PC-3 (cell line): ENCODE measurements at regions of chr6 and their contacts with region 1.

Region 1: DNA sequence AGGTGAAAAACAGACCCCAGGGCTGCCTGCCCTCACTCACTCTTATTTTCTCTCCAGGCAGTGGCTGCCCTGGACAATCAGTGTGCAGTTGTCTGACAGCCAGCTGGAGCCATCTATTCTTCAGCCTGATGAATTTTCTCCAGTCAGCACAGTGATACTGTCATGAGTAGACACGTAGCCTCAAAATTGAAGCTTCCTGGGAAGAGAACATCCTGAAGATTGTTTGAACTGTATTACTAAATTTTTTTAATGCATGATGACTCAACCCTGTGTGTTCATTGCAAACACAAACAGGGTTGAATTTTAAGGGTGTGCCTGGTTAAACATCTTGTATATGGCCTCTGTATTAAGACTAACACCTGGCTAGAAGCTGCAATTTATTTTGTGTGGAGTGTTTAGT is 49.8 kb upstream of the STXBP5 start:
- DNase-seq: peak; percentile 94
- ATAC-seq: peak; percentile 97
- H3K4me3 ChIP-seq: peak overlapping the region; percentile 27; the same call in 1 of the 2 replicates
- H3K27ac ChIP-seq: peak overlapping the region; percentile 91
- H3K4me1 ChIP-seq: peaks cover 28% of the 10 kb centered on the region
- H3K27me3 ChIP-seq: no peaks in the 10 kb centered on the region
- CTCF ChIP-seq: no peak

Region 2: DNA sequence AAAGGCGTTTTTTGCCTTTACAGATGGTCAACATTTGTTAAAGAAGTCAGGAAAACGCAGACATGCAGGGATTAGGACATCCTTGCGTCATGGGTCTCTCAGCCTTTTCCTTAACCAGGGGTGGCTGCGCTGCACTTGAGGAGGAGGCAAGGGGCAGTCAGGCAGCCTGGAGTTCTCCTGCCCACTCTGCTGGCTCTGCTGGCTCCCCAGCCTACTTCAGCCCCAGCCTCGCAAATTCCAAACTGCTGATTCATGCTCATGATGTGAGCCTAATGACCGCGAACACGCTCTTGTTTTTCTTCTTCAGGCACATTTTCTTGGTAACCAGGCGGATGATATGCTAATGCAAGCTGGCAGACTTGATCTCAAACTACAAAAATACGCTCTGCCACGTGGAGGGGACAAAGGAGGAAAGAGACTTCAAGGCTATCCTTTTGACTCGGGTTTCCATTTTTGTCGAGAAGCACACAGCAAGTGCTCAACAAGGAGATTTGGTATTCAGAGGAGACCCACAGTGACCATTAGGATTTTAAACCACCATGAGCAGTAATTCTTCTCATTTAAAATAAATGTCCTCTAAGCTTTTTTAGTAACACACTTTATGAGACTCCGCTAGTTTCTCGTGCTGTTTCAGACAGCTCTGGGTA is 240.5 kb before region 1 on chr6:
- CTCF ChIA-PET with region 1: no interaction called
- POLR2A ChIA-PET with region 1: no interaction called
- intact Hi-C with region 1: loop called (anchors 5 kb)
- DNase-seq: peak; percentile 93
- ATAC-seq: peak; percentile 76
- H3K4me3 ChIP-seq: peak overlapping the region; percentile 58
- H3K27ac ChIP-seq: peak overlapping the region; percentile 98
- H3K4me1 ChIP-seq: peaks cover 41% of the 10 kb centered on the region
- H3K27me3 ChIP-seq: no peaks in the 10 kb centered on the region
- CTCF ChIP-seq: no peak

Region 3: DNA sequence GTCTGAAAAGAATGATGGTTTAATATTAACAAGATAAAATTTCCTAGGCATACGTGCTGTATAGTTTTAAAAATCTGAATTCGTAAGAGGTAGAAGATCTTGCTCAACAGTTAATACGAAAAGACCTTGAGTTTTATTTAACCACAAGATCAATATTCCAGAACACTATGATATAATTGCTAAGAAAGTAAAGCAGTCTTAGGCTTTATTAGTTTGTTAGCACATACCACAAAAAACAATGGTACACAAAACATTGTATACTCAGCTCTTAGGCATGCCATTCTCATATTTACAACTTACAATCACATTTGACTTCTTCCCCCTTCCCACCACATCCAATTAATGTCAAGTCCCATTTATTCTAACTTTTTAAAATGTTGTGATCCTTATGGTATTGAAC is 25.4 kb after region 1 on chr6:
- CTCF ChIA-PET with region 1: no interaction called
- POLR2A ChIA-PET with region 1: no interaction called
- intact Hi-C with region 1: loop called (anchors 2 kb)
- DNase-seq: peak; percentile 54
- ATAC-seq: peak; percentile 85
- H3K4me3 ChIP-seq: no peak overlapping the region
- H3K27ac ChIP-seq: peak overlapping the region; percentile 52
- H3K4me1 ChIP-seq: peaks cover 13% of the 10 kb centered on the region
- H3K27me3 ChIP-seq: no peaks in the 10 kb centered on the region
- CTCF ChIP-seq: no peak